WTC11 (cell line): ENCODE measurements at regions of chr14 and their contacts with region 1.

Region 1: DNA sequence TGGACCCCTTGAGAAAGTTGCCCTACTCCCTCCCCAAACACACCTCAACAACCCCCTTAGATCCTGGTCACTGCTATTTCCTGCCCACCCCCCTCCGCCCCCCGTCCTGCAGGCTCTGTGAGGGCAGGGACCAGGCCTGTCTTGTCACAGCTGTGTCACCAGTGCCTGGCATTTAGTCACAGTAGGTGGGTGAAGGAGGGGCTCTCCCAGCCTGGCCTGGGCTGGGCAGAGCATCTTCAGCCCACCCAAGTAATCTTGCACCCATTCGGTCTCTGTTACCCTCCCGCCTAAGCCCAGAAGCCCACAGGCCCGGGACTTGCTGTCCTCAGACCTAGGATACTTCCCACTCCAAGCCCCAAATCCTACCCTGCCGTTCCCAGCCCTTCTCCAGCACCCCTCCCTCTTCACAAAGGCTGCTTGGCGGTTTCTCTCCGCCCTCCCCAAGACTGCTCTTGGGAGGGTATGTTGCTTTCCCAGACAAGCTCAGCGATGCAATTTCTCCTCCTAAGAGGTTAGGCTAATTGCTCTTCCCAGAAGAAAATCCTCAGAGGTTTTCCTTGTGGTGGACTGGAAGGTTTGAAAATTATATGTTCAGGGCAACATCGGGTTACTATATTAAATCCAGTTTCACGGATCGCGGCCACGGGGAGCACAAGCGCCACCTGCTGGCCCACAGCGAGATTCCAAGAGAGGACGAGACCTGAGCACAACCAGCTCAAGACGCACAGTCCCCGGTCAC is 50.8 kb upstream of the ZFP36L1 start:
- DNase-seq: peak; percentile 80
- ATAC-seq: peak; percentile 93
- H3K4me3 Mint-ChIP-seq: peak overlapping the region; percentile 82
- H3K27ac Mint-ChIP-seq: no peak overlapping the region
- H3K4me1 Mint-ChIP-seq: peaks cover 8% of the 10 kb centered on the region
- H3K27me3 Mint-ChIP-seq: no peaks in the 10 kb centered on the region; the same call in 1 of the 2 replicates
- CTCF ChIP-seq: peak; percentile 67

Region 2: DNA sequence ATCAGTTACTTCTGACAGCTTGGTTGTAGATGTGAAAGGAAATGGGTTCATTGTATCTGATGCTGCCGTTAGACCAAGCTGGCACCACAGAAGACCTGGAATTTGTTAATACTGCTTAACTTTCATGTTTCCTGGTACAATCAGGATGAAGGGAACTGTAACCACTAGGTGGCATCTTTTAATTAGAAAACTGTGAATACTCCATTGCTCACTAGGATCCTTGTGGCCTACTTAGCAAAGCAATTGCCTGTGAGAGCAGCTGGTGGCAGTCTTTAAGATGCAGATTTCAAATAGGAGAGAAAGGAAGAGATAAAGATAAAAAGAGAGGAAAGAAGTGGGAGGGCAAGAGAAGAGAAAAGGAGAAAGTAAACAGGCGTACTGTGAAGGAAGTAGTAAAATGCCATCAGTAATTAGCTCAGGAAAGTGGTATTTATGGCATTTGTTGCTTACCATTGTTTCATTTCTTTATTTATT is 909.6 kb before region 1 on chr14:
- CTCF ChIA-PET with region 1: interaction called, 10 read pairs
- POLR2A ChIA-PET with region 1: no interaction called
- DNase-seq: peak; percentile 28
- ATAC-seq: peak; percentile 91
- H3K4me3 Mint-ChIP-seq: peak overlapping the region; percentile 16
- H3K27ac Mint-ChIP-seq: peak overlapping the region; percentile 90
- H3K4me1 Mint-ChIP-seq: peaks cover 78% of the 10 kb centered on the region
- H3K27me3 Mint-ChIP-seq: no peaks in the 10 kb centered on the region
- CTCF ChIP-seq: no peak

Region 3: GRCh38 chr14:68824517-68825347 is 18.9 kb before region 1 on chr14:
- CTCF ChIA-PET with region 1: interaction called, 46 read pairs
- POLR2A ChIA-PET with region 1: no interaction called
- DNase-seq: peak; percentile 94
- ATAC-seq: peak; percentile 98
- H3K4me3 Mint-ChIP-seq: no peak overlapping the region
- H3K27ac Mint-ChIP-seq: no peak overlapping the region
- H3K4me1 Mint-ChIP-seq: peaks cover 11% of the 10 kb centered on the region
- H3K27me3 Mint-ChIP-seq: peaks cover 2% of the 10 kb centered on the region; the same call in 1 of the 2 replicates
- CTCF ChIP-seq: peak; percentile 65

Region 4: DNA sequence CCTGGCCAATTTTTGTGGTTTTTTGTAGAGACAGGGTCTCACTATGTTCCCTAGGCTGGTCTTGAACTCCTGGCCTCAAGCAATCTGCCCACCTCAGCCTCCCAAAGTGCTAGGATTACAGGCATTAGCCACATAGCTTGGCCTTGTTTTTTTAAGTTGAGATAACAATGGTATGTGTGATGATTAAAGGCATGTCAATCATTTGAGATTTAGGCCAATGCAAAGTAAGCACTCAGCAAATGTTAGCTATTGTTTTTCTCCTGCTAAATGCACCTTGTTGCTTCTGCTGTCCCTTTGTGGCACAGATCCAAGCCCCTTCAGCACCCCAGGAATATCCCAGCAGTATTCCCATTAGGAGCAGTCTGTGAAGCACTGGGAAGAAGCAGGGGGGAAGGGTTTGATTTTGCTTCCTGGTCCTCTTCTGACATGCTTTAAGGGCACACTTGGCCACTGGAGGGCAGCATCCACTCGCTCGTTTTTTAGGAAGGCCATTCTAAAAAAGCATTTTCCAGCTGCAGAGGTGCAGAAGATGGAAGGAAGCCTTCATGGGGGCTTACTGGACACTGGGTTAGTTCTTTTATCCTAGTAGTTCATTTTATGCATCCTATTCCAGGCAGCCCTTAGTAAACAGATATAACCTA is 19.4 kb after region 1 on chr14:
- CTCF ChIA-PET with region 1: interaction called, 19 read pairs
- POLR2A ChIA-PET with region 1: no interaction called
- DNase-seq: peak; percentile 85
- ATAC-seq: peak; percentile 90
- H3K4me3 Mint-ChIP-seq: no peak overlapping the region
- H3K27ac Mint-ChIP-seq: no peak overlapping the region
- H3K4me1 Mint-ChIP-seq: peaks cover 3% of the 10 kb centered on the region; the same call in 1 of the 2 replicates
- H3K27me3 Mint-ChIP-seq: no peaks in the 10 kb centered on the region; the same call in 1 of the 2 replicates
- CTCF ChIP-seq: peak; percentile 64